Activated T-helper 2 cell treated with anti-CD3 and anti-CD28 coated beads, Interferon-gamma antibody, Interleukin-2, Interleukin-4, amounts not matched to agents 10 μg/mL and 5 μg/mL and 100 μg/mL, durations not matched to agents 14 hours and 24 hours and 36 hours (primary cell): ENCODE measurements at regions of chr15 and their contacts with region 1.

Region 1: GRCh38 chr15:90648137-90649070 is 68.7 kb upstream of the BLM start:
- DNase-seq: peak; percentile 79
- H3K4me3 Mint-ChIP-seq: peak overlapping the region; percentile 6
- H3K27ac Mint-ChIP-seq: peak overlapping the region; percentile 87
- H3K4me1 Mint-ChIP-seq: peaks cover 42% of the 10 kb centered on the region
- H3K27me3 Mint-ChIP-seq: no peaks in the 10 kb centered on the region

Region 2: DNA sequence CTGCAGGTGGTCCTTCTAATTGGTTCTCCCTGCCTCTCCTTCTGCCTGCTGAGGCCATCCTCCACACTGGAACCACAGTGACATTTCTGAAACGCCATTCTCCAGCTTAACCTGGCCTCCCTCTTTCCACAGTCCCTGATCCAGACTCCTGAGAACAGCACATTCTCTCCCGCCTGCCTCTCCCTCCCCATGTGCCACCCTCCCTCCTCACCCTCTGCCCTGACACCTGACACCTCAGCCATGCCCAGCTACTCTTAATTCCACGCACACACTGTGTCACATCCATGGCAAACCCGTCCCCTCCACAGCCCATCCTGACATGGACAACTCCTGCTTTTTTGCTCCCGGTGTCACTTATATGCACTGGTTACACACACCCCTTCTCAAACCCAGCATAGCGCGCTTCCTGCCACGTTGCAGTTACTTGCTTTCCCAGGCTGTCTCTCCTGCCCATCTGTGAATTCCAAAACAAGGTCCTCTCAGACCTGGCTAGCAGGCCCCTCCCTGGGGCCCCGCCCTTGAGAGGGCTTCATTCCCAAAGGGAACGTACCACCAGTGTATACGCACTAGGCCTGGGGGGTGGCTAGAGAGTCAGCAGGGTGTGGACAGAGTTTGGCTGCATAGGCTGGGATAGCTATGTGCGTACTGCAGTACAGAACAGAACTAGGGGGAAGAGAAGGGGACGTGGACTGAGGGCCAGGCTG is 24.0 kb before region 1 on chr15:
- intact Hi-C with region 1: no loop called
- DNase-seq: no peak
- H3K4me3 Mint-ChIP-seq: no peak overlapping the region
- H3K27ac Mint-ChIP-seq: no peak overlapping the region
- H3K4me1 Mint-ChIP-seq: peaks cover 14% of the 10 kb centered on the region
- H3K27me3 Mint-ChIP-seq: no peaks in the 10 kb centered on the region

Region 3: DNA sequence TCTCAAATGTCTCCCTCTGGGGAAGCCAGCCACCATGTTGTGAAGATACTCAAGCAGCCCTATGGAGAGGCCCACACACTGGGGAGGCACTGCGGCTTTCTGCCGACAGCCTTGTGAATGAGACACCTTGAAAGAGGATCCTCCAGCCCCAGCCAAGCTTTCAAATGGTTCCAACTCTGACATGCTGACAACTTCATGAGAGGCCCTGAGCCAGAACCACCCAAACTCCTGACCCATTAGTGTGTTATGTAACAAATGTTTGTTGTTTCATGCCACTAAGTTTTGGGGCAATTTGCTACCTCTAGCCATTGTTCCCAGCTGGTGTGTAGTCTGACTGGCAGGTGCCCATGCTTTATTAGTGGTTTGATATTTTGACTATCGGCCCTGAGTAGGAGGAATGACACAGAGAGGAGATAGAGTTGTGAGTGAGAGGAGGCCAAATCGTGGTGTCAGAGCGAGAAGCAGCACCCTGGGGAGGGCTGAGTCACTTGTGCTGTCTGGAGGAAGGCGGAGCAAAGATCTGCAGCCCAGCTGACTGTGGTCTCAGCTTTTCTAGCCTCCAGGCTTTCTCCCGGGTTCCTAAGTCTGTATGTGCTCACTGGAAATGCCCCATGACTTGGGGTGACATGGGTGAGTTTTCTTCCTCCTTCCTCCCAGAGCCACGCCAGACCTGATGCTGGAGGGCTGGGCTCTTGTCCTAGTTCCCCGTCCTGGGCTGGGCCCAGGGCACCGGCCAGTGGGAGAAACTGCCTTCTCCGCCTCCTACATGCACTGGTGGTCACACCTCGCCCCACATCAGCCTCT is 12.0 kb after region 1 on chr15:
- intact Hi-C with region 1: loop called (anchors 1 kb)
- DNase-seq: peak; percentile 73
- H3K4me3 Mint-ChIP-seq: peak overlapping the region; percentile 74
- H3K27ac Mint-ChIP-seq: peak overlapping the region; percentile 82
- H3K4me1 Mint-ChIP-seq: peaks cover 72% of the 10 kb centered on the region
- H3K27me3 Mint-ChIP-seq: no peaks in the 10 kb centered on the region

Region 4: GRCh38 chr15:90686435-90687218 is 38.2 kb after region 1 on chr15:
- intact Hi-C with region 1: loop called (anchors 1 kb)
- DNase-seq: peak; percentile 53
- H3K4me3 Mint-ChIP-seq: peak overlapping the region; percentile 30
- H3K27ac Mint-ChIP-seq: peak overlapping the region; percentile 98
- H3K4me1 Mint-ChIP-seq: peaks cover 50% of the 10 kb centered on the region
- H3K27me3 Mint-ChIP-seq: no peaks in the 10 kb centered on the region

Region 5: GRCh38 chr15:90729261-90729660 is 80.9 kb after region 1 on chr15:
- intact Hi-C with region 1: no loop called
- DNase-seq: no peak
- H3K4me3 Mint-ChIP-seq: no peak overlapping the region
- H3K27ac Mint-ChIP-seq: no peak overlapping the region
- H3K4me1 Mint-ChIP-seq: peaks cover 17% of the 10 kb centered on the region
- H3K27me3 Mint-ChIP-seq: no peaks in the 10 kb centered on the region

Region 6: DNA sequence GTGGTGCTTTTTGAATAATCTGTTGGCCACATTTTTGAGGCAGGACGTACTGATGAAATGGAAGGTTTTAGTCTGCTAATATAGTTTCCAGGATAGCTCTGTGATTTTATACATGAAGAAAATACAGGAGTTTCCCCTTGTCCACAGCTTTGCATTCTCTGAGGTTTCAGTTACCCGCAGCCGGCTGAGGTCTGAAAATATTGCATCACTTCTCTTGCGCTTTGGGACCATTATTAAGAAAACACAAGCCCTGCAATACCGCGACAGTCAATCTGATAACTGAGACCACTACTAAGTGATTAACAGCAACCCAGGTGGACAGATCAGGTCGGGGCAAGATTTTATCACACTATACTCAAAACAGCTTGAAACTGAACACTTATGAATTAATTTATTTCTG is 101.8 kb after region 1 on chr15:
- intact Hi-C with region 1: loop called (anchors 5 kb)
- DNase-seq: no peak
- H3K4me3 Mint-ChIP-seq: peak overlapping the region; percentile 58
- H3K27ac Mint-ChIP-seq: peak overlapping the region; percentile 89
- H3K4me1 Mint-ChIP-seq: peaks cover 46% of the 10 kb centered on the region
- H3K27me3 Mint-ChIP-seq: no peaks in the 10 kb centered on the region

Region 7: GRCh38 chr15:90869601-90870353 is 221.4 kb after region 1 on chr15:
- intact Hi-C with region 1: loop called (anchors 5 kb)
- DNase-seq: peak; percentile 31
- H3K4me3 Mint-ChIP-seq: peak overlapping the region; percentile 96
- H3K27ac Mint-ChIP-seq: peak overlapping the region; percentile 91
- H3K4me1 Mint-ChIP-seq: peaks cover 51% of the 10 kb centered on the region
- H3K27me3 Mint-ChIP-seq: no peaks in the 10 kb centered on the region

Region 8: GRCh38 chr15:90931737-90932659 is 283.6 kb after region 1 on chr15 and contains the start of gene HDDC3:
- intact Hi-C with region 1: loop called (anchors 1 kb)
- DNase-seq: peak; percentile 85
- H3K4me3 Mint-ChIP-seq: peak within 1 kb of the TSS; percentile 92
- H3K27ac Mint-ChIP-seq: peak within 1 kb of the TSS; percentile 98
- H3K4me1 Mint-ChIP-seq: peaks cover 50% of the 10 kb centered on the region
- H3K27me3 Mint-ChIP-seq: no peaks in the 10 kb centered on the region
- total RNA-seq, gene HDDC3: 38.6 and 43.0 TPM in 2 replicates